SK-N-SH (cell line): ENCODE measurements at regions of chr3 and their contacts with region 1.

Region 1: DNA sequence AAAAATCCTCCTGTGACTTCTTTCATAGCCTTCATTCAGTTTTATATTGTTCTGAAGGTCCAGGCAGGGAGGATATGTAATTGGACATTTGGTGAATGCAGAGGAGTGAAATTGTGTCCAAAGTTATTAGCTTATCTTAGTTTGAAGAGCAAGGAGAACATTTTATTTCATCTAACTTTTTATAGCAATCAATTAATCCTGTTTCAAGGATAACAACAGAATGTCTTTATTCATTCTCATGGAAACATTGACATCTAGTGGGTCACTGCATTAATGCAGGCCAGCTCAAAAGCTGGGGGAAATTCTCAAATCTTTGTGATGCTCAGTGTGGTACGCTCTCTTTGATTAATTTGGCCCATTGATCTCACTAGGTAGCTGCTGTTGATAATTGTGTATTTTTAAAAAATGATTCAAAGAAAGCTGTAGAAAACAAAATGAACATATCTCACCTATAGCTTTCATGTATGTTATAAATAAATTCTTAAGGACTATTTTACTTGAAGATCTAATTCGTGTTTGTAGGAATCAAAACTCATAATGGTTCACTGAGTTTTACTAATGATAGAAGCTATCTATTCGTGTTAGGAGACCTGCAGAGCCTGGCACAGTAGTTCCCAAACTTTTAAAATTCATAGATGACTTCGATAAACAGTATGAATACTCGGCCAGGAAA is 150.8 kb upstream of the KCNMB2 start:
- DNase-seq: peak; percentile 52
- H3K4me3 ChIP-seq: no peak overlapping the region; a peak in 1 of 4 replicates
- H3K27ac ChIP-seq: peak overlapping the region; percentile 84 to 95
- H3K4me1 ChIP-seq: peaks cover 21 to 28% of the 10 kb centered on the region in 2 experiments
- H3K27me3 ChIP-seq: no peaks in the 10 kb centered on the region
- CTCF ChIP-seq: peak; percentile 95
- EP300 ChIP-seq: no peak
- RAD21 ChIP-seq: peak; percentile 97

Region 2: DNA sequence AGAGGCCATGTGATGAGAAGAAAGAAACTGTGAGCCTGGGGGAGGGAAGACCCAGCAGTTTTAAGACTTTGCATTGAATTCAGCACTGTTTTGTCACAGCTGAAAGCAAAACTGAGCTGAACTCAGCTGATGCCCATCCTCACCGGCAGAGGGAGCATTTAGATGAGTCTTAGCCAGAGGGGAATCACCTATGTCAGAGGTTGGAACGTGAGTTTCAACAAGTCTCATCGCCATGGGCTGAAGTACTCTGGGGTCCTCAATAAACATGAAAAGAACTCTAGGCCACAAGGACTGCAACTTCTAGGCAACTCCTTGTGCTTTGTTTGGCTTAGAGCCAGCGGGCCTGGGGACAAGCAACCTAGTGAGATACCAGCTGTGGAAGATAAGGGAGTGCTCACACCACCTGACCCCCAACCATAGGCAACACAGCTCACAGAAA is 1512.6 kb before region 1 on chr3:
- CTCF ChIA-PET with region 1: interaction called, 13 read pairs
- POLR2A ChIA-PET with region 1: no interaction called
- DNase-seq: peak; percentile 18
- H3K4me3 ChIP-seq: peak overlapping the region in 1 of 2 experiments; percentile 31; a peak in 1 of 4 replicates
- H3K27ac ChIP-seq: no peak overlapping the region
- H3K4me1 ChIP-seq: peaks cover 0 to 3% of the 10 kb centered on the region in 2 experiments; a peak in 1 of 4 replicates
- H3K27me3 ChIP-seq: no peaks in the 10 kb centered on the region
- CTCF ChIP-seq: peak; percentile 77
- EP300 ChIP-seq: no peak
- RAD21 ChIP-seq: peak; percentile 67

Region 3: GRCh38 chr3:178405531-178405930 is 20.1 kb after region 1 on chr3:
- CTCF ChIA-PET with region 1: interaction called, 10 read pairs
- POLR2A ChIA-PET with region 1: no interaction called
- DNase-seq: no peak
- H3K4me3 ChIP-seq: no peak overlapping the region
- H3K27ac ChIP-seq: no peak overlapping the region
- H3K4me1 ChIP-seq: no peaks in the 10 kb centered on the region
- H3K27me3 ChIP-seq: no peaks in the 10 kb centered on the region
- CTCF ChIP-seq: no peak
- EP300 ChIP-seq: no peak
- RAD21 ChIP-seq: no peak